H1 (cell line): ENCODE measurements at regions of chr16 and their contacts with region 1.

Region 1: DNA sequence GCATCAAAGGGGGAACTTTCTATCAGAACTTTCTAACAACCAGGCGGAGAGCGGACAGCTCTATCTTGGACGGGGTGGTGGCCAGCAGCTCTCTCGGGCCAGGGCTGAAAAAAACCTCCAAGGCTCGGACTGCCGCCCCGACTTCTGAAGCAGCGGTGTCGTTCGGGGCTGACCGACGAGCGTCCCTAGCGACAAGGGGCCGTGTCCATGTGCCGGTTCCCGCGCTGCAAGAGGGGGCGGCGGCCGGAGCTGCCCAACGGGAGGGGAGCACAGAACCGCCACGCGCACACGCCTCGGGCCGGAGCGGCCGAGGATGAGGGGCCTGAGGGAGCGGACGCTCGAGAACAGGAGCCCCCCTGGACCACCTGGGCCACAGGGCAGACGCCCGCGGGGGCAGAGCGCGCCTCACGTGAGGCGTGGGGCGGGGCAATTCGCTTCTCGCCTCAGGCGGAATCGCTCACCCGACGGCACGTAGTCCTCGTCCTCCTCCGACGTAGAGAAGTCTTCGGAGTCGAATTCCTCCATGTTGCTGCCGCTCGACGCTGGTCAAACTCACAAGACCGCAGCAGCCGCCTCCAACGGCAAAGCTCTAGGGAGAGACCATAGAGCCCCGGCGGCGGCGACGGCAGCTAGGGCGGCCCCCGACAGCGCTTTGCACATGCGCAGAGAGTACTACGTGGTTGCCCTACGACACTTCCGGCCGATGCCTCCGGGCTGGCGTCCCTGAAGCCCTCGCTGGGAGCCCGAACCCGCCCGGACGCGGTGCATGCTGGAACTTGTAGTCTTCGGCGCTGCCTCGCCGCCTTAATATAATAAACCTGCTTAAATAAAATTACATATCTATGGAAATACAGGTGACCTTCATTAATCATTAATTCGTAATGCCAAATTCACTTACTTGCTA is at the start of gene CFDP1:
- DNase-seq: peak; percentile 89 to 97
- H3K4me3 ChIP-seq: peak within 1 kb of the TSS; percentile 74 to 95 (median 83)
- H3K27ac ChIP-seq: peak within 1 kb of the TSS; percentile 93
- H3K4me1 ChIP-seq: peaks cover 0 to 7% (median 3%) of the 10 kb centered on the region in 4 experiments; a peak in 4 of 7 replicates
- H3K27me3 ChIP-seq: no peaks in the 10 kb centered on the region
- CTCF ChIP-seq: no peak
- EP300 ChIP-seq: 0 out of 3 replicates have a peak, but pooled peaks of 1 of the 2 experiments have one; percentile 55
- POLR2A ChIP-seq: peak in 1 of 2 experiments; percentile 71; a peak in 1 of 3 replicates
- RAD21 ChIP-seq: no peak
- total RNA-seq, gene CFDP1: 76.9 and 77.3 TPM in 2 replicates

Region 2: DNA sequence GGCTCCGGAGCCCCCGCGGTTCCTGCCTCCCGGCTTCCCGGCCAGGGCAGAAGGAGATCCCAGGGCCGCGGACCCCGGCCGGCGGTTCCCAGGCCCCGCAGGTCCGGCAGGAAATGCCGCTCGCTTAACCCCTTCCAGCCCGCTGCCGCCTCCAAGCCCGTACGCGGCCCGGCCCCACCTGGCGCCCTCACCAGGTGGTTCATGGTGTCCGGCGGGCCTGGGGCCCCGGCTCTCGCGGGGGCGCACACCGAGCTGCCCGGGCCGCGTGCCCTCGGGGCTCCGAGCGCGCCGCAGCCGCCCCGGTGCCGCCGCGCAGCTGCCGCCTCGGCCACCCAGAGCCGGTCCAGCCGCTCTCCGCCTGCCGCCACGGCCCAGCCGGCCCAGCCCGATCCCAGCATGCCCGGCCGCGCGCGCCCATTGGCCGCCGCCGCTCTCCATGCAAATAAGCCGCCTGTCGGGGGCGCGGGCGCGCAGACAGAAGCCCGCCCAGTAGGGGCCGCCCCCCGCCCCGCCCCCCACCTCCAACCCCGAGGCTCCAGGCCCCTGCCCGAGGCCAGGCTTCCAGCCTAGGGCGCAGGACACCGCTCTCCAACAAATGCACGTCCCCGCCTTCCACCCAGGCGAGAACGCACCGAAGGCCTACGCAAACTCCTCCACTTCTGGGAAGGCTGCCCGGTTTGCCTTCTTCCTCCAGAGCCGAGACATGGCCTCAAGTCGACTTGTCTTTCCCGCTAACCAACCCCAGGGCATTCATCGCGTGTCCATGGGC is 181.6 kb before region 1 on chr16 and contains the start of gene BCAR1:
- CTCF ChIA-PET with region 1: no interaction called
- POLR2A ChIA-PET with region 1: interaction called, 12 read pairs
- DNase-seq: peak; percentile 50 to 89
- H3K4me3 ChIP-seq: peak within 1 kb of the TSS; percentile 64 to 87 (median 68)
- H3K27ac ChIP-seq: peak within 1 kb of the TSS; percentile 84
- H3K4me1 ChIP-seq: peaks cover 13 to 76% (median 64%) of the 10 kb centered on the region in 4 experiments
- H3K27me3 ChIP-seq: no peaks in the 10 kb centered on the region; a peak in 1 of 7 replicates
- CTCF ChIP-seq: no peak
- EP300 ChIP-seq: no peak
- POLR2A ChIP-seq: no peak; a peak in 1 of 3 replicates
- RAD21 ChIP-seq: no peak
- total RNA-seq, gene BCAR1: 103 and 105 TPM in 2 replicates

Region 3: GRCh38 chr16:75443298-75443697 is 10.2 kb after region 1 on chr16:
- CTCF ChIA-PET with region 1: interaction called, 3 read pairs
- POLR2A ChIA-PET with region 1: interaction called, 35 read pairs
- DNase-seq: no peak
- H3K4me3 ChIP-seq: no peak overlapping the region
- H3K27ac ChIP-seq: no peak overlapping the region
- H3K4me1 ChIP-seq: no peaks in the 10 kb centered on the region
- H3K27me3 ChIP-seq: no peaks in the 10 kb centered on the region
- CTCF ChIP-seq: no peak
- EP300 ChIP-seq: no peak
- POLR2A ChIP-seq: no peak
- RAD21 ChIP-seq: no peak

Region 4: GRCh38 chr16:75464130-75464918 is 31.2 kb after region 1 on chr16 and contains the start of gene TMEM170A:
- CTCF ChIA-PET with region 1: interaction called, 8 read pairs
- POLR2A ChIA-PET with region 1: interaction called, 23 read pairs
- DNase-seq: peak; percentile 94 to 99
- H3K4me3 ChIP-seq: peak within 1 kb of the TSS; percentile 55 to 91 (median 88)
- H3K27ac ChIP-seq: peak within 1 kb of the TSS; percentile 92
- H3K4me1 ChIP-seq: peaks cover 0 to 2% (median 2%) of the 10 kb centered on the region in 4 experiments; a peak in 1 of 7 replicates
- H3K27me3 ChIP-seq: no peaks in the 10 kb centered on the region
- CTCF ChIP-seq: peak; percentile 98 to 100 (median 99)
- EP300 ChIP-seq: peak in 1 of 2 experiments; percentile 15; a peak in 1 of 3 replicates
- POLR2A ChIP-seq: peak; percentile 79 to 98
- RAD21 ChIP-seq: peak; percentile 58 to 76
- total RNA-seq, gene TMEM170A: 52.8 and 56.6 TPM in 2 replicates

Region 5: DNA sequence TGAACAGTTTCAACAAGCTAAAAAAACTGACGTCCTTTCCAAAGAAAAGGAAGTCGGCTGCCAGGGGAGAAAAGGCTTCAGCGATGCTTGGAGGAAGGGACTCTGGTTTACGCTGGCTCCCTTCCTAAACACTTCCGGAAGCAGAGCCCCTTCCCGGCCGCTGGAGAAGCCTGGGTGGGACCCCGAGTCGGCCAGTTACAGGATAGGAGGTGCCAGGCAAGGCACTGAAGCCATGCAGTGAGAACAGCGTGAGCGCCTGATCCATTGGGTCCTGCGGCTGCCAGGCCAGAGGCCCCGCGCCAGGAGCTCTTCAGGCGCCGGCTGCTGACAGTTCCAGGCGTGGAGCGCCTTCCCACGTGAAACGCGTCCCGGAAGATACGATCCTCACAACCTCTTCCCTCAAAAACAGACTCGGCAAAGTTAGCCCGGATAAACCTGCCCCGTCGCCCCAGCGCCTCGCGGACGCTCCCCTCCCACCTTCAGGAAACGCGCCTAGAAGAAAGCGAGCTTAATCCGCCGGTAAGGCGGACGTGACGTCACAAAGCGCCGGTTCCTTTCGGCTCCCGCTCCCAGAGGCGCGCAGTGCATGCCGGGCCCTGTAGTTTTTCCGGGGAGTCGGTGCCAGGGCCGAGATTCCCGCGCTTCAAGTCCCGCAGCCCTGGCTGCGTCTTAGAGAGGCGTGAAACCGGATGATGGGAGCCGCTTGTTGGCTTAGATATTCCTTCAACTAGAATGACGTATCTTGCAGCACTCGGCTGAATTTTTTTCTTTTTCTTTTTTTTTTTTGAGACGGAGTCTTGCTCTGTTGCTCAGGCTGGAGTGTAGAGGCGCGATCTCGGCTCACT is 189.9 kb after region 1 on chr16 and contains the start of gene ADAT1:
- CTCF ChIA-PET with region 1: no interaction called
- POLR2A ChIA-PET with region 1: interaction called, 10 read pairs
- DNase-seq: peak; percentile 91 to 96
- H3K4me3 ChIP-seq: peak within 1 kb of the TSS; percentile 80 to 96 (median 85)
- H3K27ac ChIP-seq: peak within 1 kb of the TSS; percentile 90
- H3K4me1 ChIP-seq: peaks cover 0 to 9% (median 4%) of the 10 kb centered on the region in 4 experiments; a peak in 5 of 7 replicates
- H3K27me3 ChIP-seq: no peaks in the 10 kb centered on the region
- CTCF ChIP-seq: no peak
- EP300 ChIP-seq: peak in 1 of 2 experiments; percentile 12; a peak in 1 of 3 replicates
- POLR2A ChIP-seq: peak; percentile 77 to 94
- RAD21 ChIP-seq: no peak
- total RNA-seq, gene ADAT1: 44.7 and 47.4 TPM in 2 replicates